ENCODE measurements at regions of chr1 and their contacts with region 1.

Region 1: GRCh38 chr1:174262349-174263241 is 103.3 kb downstream of the RABGAP1L start:
- DNase-seq: no peak
- ATAC-seq: peak; percentile 71
- H3K4me3 Mint-ChIP-seq: no peak overlapping the region
- H3K27ac Mint-ChIP-seq: no peak overlapping the region
- H3K4me1 Mint-ChIP-seq: no peaks in the 10 kb centered on the region
- H3K27me3 Mint-ChIP-seq: no peaks in the 10 kb centered on the region
- CTCF ChIP-seq: peak; percentile 41; the same call in 1 of the 2 replicates

Region 2: DNA sequence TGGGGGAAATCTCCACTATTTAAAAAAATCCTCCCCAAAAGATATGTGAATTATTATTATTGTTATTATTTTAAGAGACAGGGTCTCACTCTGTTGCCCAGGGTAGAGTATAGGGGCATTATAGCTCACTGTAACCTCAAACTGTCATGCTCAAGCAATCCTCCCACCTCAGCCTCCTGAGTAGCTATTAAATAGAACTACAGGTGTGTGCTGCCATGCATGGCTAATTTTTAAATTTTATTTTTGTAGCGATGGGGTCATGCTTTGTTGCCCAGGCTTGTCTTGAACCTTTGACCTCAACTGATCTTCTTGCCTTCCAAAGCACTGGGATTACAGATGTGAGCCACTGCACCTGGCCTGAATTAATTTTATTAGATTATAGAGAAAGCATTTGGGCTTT is 13.5 kb after region 1 on chr1:
- CTCF ChIA-PET with region 1: interaction called, 14 read pairs
- POLR2A ChIA-PET with region 1: no interaction called
- DNase-seq: no peak
- ATAC-seq: no peak
- H3K4me3 Mint-ChIP-seq: no peak overlapping the region
- H3K27ac Mint-ChIP-seq: no peak overlapping the region
- H3K4me1 Mint-ChIP-seq: no peaks in the 10 kb centered on the region
- H3K27me3 Mint-ChIP-seq: no peaks in the 10 kb centered on the region
- CTCF ChIP-seq: no peak

Region 3: GRCh38 chr1:174297351-174297750 is 34.8 kb after region 1 on chr1:
- CTCF ChIA-PET with region 1: interaction called, 10 read pairs
- POLR2A ChIA-PET with region 1: no interaction called
- DNase-seq: peak; percentile 44
- ATAC-seq: peak; percentile 89
- H3K4me3 Mint-ChIP-seq: no peak overlapping the region
- H3K27ac Mint-ChIP-seq: peak overlapping the region; percentile 75; the same call in 1 of the 2 replicates
- H3K4me1 Mint-ChIP-seq: peaks cover 10% of the 10 kb centered on the region
- H3K27me3 Mint-ChIP-seq: no peaks in the 10 kb centered on the region; the same call in 1 of the 2 replicates
- CTCF ChIP-seq: no peak

Region 4: GRCh38 chr1:174726167-174726879 is 463.7 kb after region 1 on chr1:
- CTCF ChIA-PET with region 1: interaction called, 32 read pairs
- POLR2A ChIA-PET with region 1: no interaction called
- DNase-seq: no peak
- ATAC-seq: no peak
- H3K4me3 Mint-ChIP-seq: no peak overlapping the region
- H3K27ac Mint-ChIP-seq: no peak overlapping the region
- H3K4me1 Mint-ChIP-seq: peaks cover 6% of the 10 kb centered on the region
- H3K27me3 Mint-ChIP-seq: no peaks in the 10 kb centered on the region
- CTCF ChIP-seq: no peak

Region 5: GRCh38 chr1:174747613-174748012 is 485.0 kb after region 1 on chr1:
- CTCF ChIA-PET with region 1: interaction called, 30 read pairs
- POLR2A ChIA-PET with region 1: no interaction called
- DNase-seq: no peak
- ATAC-seq: no peak
- H3K4me3 Mint-ChIP-seq: no peak overlapping the region
- H3K27ac Mint-ChIP-seq: no peak overlapping the region
- H3K4me1 Mint-ChIP-seq: peaks cover 6% of the 10 kb centered on the region; the same call in 1 of the 2 replicates
- H3K27me3 Mint-ChIP-seq: no peaks in the 10 kb centered on the region
- CTCF ChIP-seq: no peak